Natural killer cell (primary cell): ENCODE measurements at regions of chr1 and their contacts with region 1.

Region 1: DNA sequence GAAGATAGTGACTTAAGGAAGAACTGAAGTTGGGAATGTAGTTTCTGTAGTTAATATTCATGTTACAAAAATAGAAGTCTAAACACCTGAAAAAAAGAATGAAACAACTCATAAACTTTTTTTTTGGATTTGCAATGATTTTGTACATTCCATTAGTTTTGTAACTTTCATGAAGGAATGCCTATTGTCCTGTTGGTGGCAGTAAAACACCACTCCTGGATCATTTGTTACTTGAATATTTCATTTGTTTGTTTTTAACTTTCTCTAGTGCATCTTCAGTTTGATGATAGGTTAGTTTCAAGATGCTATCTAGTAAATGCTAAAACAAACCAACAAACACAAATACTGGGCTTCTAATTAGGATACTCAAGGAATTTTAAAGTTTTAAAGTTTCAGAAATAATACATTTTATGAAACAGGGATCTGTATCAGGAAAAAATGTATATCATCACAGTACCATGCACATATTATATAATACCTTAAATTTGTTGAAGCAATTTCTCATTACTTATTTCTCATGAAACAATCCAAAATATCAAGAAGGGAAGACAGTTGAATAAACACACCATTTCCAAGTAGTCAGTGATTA is 229.7 kb upstream of the CACYBP start:
- DNase-seq: peak in 1 of 2 donors; percentile 78
- ATAC-seq: peak in 2 of 3 donors; percentile 70
- H3K4me3 ChIP-seq: no peak overlapping the region
- H3K4me3 Mint-ChIP-seq: no peak overlapping the region
- H3K27ac ChIP-seq: no peak overlapping the region
- H3K27ac Mint-ChIP-seq: peak overlapping the region in 1 of 2 donors; percentile 35
- H3K4me1 ChIP-seq: no peaks in the 10 kb centered on the region
- H3K4me1 Mint-ChIP-seq: peaks cover 0 to 12% of the 10 kb centered on the region in 2 donors
- H3K27me3 ChIP-seq: no peaks in the 10 kb centered on the region
- H3K27me3 Mint-ChIP-seq: no peaks in the 10 kb centered on the region
- CTCF ChIP-seq: peak; percentile 82

Region 2: GRCh38 chr1:174753131-174753530 is 16.9 kb before region 1 on chr1:
- intact Hi-C with region 1: no loop called
- DNase-seq: no peak
- ATAC-seq: no peak
- H3K4me3 ChIP-seq: no peak overlapping the region
- H3K4me3 Mint-ChIP-seq: no peak overlapping the region
- H3K27ac ChIP-seq: no peak overlapping the region
- H3K27ac Mint-ChIP-seq: no peak overlapping the region
- H3K4me1 ChIP-seq: no peaks in the 10 kb centered on the region
- H3K4me1 Mint-ChIP-seq: peaks cover 9 to 11% of the 10 kb centered on the region in 2 donors
- H3K27me3 ChIP-seq: no peaks in the 10 kb centered on the region
- H3K27me3 Mint-ChIP-seq: no peaks in the 10 kb centered on the region
- CTCF ChIP-seq: no peak

Region 3: DNA sequence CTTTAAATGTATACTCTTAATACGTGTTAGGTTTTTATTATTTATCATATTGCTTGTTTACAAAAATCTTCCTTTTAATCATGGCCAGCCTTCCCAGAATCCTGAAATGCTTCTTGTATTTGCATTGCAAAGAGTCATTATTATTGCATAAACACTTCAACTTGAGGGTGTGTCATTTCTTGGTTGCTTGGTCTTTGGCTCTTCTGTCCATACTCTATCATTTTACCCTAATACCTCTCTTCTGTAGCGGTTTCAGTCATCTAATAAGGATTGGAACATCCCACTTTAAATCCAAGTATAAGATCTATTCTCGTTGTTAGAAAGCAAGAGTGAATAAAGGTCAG is 29.1 kb after region 1 on chr1:
- intact Hi-C with region 1: loop called (anchors 1 kb)
- DNase-seq: peak in 1 of 2 donors; percentile 5
- ATAC-seq: no peak
- H3K4me3 ChIP-seq: peak overlapping the region; percentile 70
- H3K4me3 Mint-ChIP-seq: no peak overlapping the region
- H3K27ac ChIP-seq: peak overlapping the region; percentile 83
- H3K27ac Mint-ChIP-seq: no peak overlapping the region
- H3K4me1 ChIP-seq: peaks cover 6% of the 10 kb centered on the region
- H3K4me1 Mint-ChIP-seq: peaks cover 14 to 16% of the 10 kb centered on the region in 2 donors
- H3K27me3 ChIP-seq: no peaks in the 10 kb centered on the region
- H3K27me3 Mint-ChIP-seq: no peaks in the 10 kb centered on the region
- CTCF ChIP-seq: no peak

Region 4: GRCh38 chr1:174982971-174983689 is 213.1 kb after region 1 on chr1:
- intact Hi-C with region 1: loop called (anchors 1 kb)
- DNase-seq: peak in 1 of 2 donors; percentile 82
- ATAC-seq: peak; percentile 37 to 62 (median 41)
- H3K4me3 ChIP-seq: no peak overlapping the region
- H3K4me3 Mint-ChIP-seq: no peak overlapping the region
- H3K27ac ChIP-seq: no peak overlapping the region
- H3K27ac Mint-ChIP-seq: peak overlapping the region; percentile 53 to 58
- H3K4me1 ChIP-seq: peaks cover 3% of the 10 kb centered on the region
- H3K4me1 Mint-ChIP-seq: peaks cover 9 to 14% of the 10 kb centered on the region in 2 donors
- H3K27me3 ChIP-seq: no peaks in the 10 kb centered on the region
- H3K27me3 Mint-ChIP-seq: no peaks in the 10 kb centered on the region
- CTCF ChIP-seq: peak; percentile 78

Region 5: DNA sequence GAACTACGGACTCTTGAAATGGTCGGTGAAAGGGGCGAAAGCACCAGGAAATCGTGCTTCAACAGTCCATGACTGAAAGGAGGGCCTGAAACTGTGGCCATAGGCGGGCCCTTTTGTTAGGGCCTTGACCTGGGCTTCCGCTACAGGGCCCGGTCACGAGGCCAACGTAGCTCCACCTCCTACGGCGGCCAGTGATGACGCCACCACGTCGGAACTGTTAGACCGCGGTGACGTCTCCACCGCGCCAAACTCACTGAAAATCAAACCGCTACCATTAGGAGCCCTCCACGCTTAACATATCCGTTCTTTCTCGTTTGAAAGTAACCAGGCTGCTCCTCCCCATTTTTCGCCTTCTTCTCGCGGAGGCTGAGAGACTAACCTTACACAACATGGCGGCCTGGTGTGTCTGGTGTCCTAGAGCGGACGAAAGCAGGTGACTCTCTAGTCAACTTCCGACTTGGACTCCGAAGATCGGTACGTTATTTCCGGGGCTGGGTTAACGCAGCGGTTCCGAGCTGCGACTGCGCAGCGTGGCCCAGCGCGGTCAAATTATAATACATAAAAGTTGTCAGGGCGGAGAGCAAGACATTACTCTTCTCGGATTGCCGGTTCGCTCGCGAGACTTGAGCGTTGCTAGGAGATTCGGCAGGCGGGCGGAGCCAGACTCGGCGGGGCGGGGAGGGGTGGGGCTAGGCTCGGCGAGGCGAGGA is 229.3 kb after region 1 on chr1:
- intact Hi-C with region 1: loop called (anchors 1 kb)
- DNase-seq: peak; percentile 94 to 99
- ATAC-seq: peak; percentile 77 to 91 (median 79)
- H3K4me3 ChIP-seq: peak overlapping the region; percentile 81
- H3K4me3 Mint-ChIP-seq: no peak overlapping the region
- H3K27ac ChIP-seq: peak overlapping the region; percentile 96
- H3K27ac Mint-ChIP-seq: no peak overlapping the region
- H3K4me1 ChIP-seq: peaks cover 7% of the 10 kb centered on the region
- H3K4me1 Mint-ChIP-seq: peaks cover 33 to 34% of the 10 kb centered on the region in 2 donors
- H3K27me3 ChIP-seq: no peaks in the 10 kb centered on the region
- H3K27me3 Mint-ChIP-seq: no peaks in the 10 kb centered on the region
- CTCF ChIP-seq: no peak

Region 6: DNA sequence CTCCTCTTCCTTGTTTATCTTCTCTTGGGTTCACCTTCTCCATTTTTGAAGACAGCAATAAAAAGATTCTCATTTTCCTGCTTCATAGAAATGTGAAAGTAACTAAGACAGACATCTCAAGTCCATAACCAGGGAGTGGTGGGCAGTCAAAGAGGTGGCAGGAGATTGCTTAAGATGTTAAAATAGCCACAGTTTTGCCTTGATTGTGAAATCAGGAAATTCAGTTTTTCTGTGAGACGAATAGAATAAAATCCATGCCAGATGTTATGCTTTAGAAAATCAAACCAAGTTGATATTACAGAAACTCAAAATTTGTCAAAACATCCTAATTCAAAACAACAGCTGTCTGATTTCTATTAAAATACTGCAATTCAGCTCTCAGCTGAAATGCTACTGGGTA is 354.8 kb after region 1 on chr1:
- intact Hi-C with region 1: loop called (anchors 2 kb)
- DNase-seq: no peak
- ATAC-seq: no peak
- H3K4me3 ChIP-seq: no peak overlapping the region
- H3K4me3 Mint-ChIP-seq: no peak overlapping the region
- H3K27ac ChIP-seq: no peak overlapping the region
- H3K27ac Mint-ChIP-seq: no peak overlapping the region
- H3K4me1 ChIP-seq: peaks cover 3% of the 10 kb centered on the region
- H3K4me1 Mint-ChIP-seq: peaks cover 0 to 5% of the 10 kb centered on the region in 2 donors
- H3K27me3 ChIP-seq: no peaks in the 10 kb centered on the region
- H3K27me3 Mint-ChIP-seq: peaks cover 0 to 10% of the 10 kb centered on the region in 2 donors
- CTCF ChIP-seq: no peak